MCF 10A (cell line): ENCODE measurements at regions of chr20 and their contacts with region 1.

Region 1: GRCh38 chr20:9978397-9979004 is 56.3 kb upstream of the ANKEF1 start:
- DNase-seq: peak; percentile 88
- H3K4me3 Mint-ChIP-seq: no peak overlapping the region
- H3K27ac Mint-ChIP-seq: no peak overlapping the region
- H3K4me1 Mint-ChIP-seq: peaks cover 10% of the 10 kb centered on the region
- H3K27me3 Mint-ChIP-seq: no peaks in the 10 kb centered on the region
- CTCF ChIP-seq: peak; percentile 87

Region 2: GRCh38 chr20:9756660-9757059 is 221.8 kb before region 1 on chr20:
- CTCF ChIA-PET with region 1: no interaction called
- POLR2A ChIA-PET with region 1: no interaction called
- intact Hi-C with region 1: no loop called
- DNase-seq: no peak
- H3K4me3 Mint-ChIP-seq: no peak overlapping the region
- H3K27ac Mint-ChIP-seq: no peak overlapping the region
- H3K4me1 Mint-ChIP-seq: no peaks in the 10 kb centered on the region
- H3K27me3 Mint-ChIP-seq: no peaks in the 10 kb centered on the region
- CTCF ChIP-seq: no peak

Region 3: GRCh38 chr20:9792674-9793073 is 185.8 kb before region 1 on chr20:
- CTCF ChIA-PET with region 1: no interaction called
- POLR2A ChIA-PET with region 1: no interaction called
- intact Hi-C with region 1: no loop called
- DNase-seq: peak; percentile 4
- H3K4me3 Mint-ChIP-seq: no peak overlapping the region
- H3K27ac Mint-ChIP-seq: no peak overlapping the region
- H3K4me1 Mint-ChIP-seq: no peaks in the 10 kb centered on the region
- H3K27me3 Mint-ChIP-seq: no peaks in the 10 kb centered on the region
- CTCF ChIP-seq: no peak

Region 4: GRCh38 chr20:9945408-9945807 is 33.1 kb before region 1 on chr20:
- CTCF ChIA-PET with region 1: interaction called, 11 read pairs
- POLR2A ChIA-PET with region 1: no interaction called
- intact Hi-C with region 1: no loop called
- DNase-seq: peak; percentile 43
- H3K4me3 Mint-ChIP-seq: no peak overlapping the region
- H3K27ac Mint-ChIP-seq: no peak overlapping the region
- H3K4me1 Mint-ChIP-seq: no peaks in the 10 kb centered on the region
- H3K27me3 Mint-ChIP-seq: no peaks in the 10 kb centered on the region
- CTCF ChIP-seq: no peak

Region 5: GRCh38 chr20:10040070-10040975 is 61.8 kb after region 1 on chr20:
- CTCF ChIA-PET with region 1: interaction called, 25 read pairs
- POLR2A ChIA-PET with region 1: interaction called, 3 read pairs
- intact Hi-C with region 1: loop called (anchors 5 kb)
- DNase-seq: peak; percentile 80
- H3K4me3 Mint-ChIP-seq: no peak overlapping the region
- H3K27ac Mint-ChIP-seq: peak overlapping the region; percentile 78
- H3K4me1 Mint-ChIP-seq: peaks cover 12% of the 10 kb centered on the region
- H3K27me3 Mint-ChIP-seq: no peaks in the 10 kb centered on the region
- CTCF ChIP-seq: no peak

Region 6: GRCh38 chr20:10096790-10097189 is 118.3 kb after region 1 on chr20:
- CTCF ChIA-PET with region 1: interaction called, 826 read pairs
- POLR2A ChIA-PET with region 1: interaction called, 64 read pairs
- intact Hi-C with region 1: no loop called
- DNase-seq: no peak
- H3K4me3 Mint-ChIP-seq: no peak overlapping the region
- H3K27ac Mint-ChIP-seq: no peak overlapping the region
- H3K4me1 Mint-ChIP-seq: peaks cover 11% of the 10 kb centered on the region
- H3K27me3 Mint-ChIP-seq: no peaks in the 10 kb centered on the region
- CTCF ChIP-seq: no peak

Region 7: GRCh38 chr20:10419550-10420133 is 441.1 kb after region 1 on chr20:
- CTCF ChIA-PET with region 1: interaction called, 345 read pairs
- POLR2A ChIA-PET with region 1: interaction called, 8 read pairs
- intact Hi-C with region 1: no loop called
- DNase-seq: peak; percentile 84
- H3K4me3 Mint-ChIP-seq: peak overlapping the region; percentile 63
- H3K27ac Mint-ChIP-seq: peak overlapping the region; percentile 84
- H3K4me1 Mint-ChIP-seq: peaks cover 33% of the 10 kb centered on the region
- H3K27me3 Mint-ChIP-seq: no peaks in the 10 kb centered on the region
- CTCF ChIP-seq: no peak

Region 8: DNA sequence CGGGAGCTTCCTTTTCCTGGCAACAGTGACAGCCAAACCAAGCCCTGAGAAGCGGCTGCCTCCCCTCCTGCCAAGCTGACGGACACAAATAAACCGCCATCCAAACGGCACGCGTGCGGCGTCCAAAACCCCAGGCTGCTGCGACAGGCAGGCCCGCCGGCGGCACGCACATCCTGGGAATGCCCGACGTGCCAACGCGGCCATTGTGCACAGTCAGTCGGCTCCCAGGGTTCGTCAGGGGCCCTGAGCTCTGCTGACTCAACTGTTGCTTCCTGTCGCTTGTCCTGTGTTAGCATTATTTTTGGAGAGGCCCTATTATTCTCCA is 688.5 kb after region 1 on chr20:
- CTCF ChIA-PET with region 1: interaction called, 3 read pairs
- POLR2A ChIA-PET with region 1: interaction called, 3 read pairs
- intact Hi-C with region 1: loop called (anchors 1 kb)
- DNase-seq: peak; percentile 78
- H3K4me3 Mint-ChIP-seq: peak overlapping the region; percentile 33
- H3K27ac Mint-ChIP-seq: peak overlapping the region; percentile 68
- H3K4me1 Mint-ChIP-seq: peaks cover 46% of the 10 kb centered on the region
- H3K27me3 Mint-ChIP-seq: no peaks in the 10 kb centered on the region
- CTCF ChIP-seq: no peak